ENCODE measurements at regions of chr1 and their contacts with region 1.

Region 1: GRCh38 chr1:32335790-32336590 is at the start of gene MARCKSL1:
- DNase-seq: peak; percentile 63
- ATAC-seq: peak; percentile 49
- H3K4me3 ChIP-seq: peak within 1 kb of the TSS; percentile 70 to 95 (median 84)
- H3K27ac ChIP-seq: peak within 1 kb of the TSS; percentile 68
- H3K4me1 ChIP-seq: peaks cover 57% of the 10 kb centered on the region
- H3K27me3 ChIP-seq: peaks cover 0 to 4% of the 10 kb centered on the region in 2 experiments; a peak in 2 of 5 replicates
- CTCF ChIP-seq: no peak
- EP300 ChIP-seq: no peak
- POLR2A ChIP-seq: peak; percentile 91 to 93
- RAD21 ChIP-seq: no peak
- total RNA-seq, gene MARCKSL1: 81.9 and 85.1 TPM in 2 replicates

Region 2: GRCh38 chr1:32215629-32216480 is 120.1 kb before region 1 on chr1:
- CTCF ChIA-PET with region 1: interaction called, 3 read pairs
- POLR2A ChIA-PET with region 1: interaction called, 22 read pairs
- in situ Hi-C with region 1: no loop called
- intact Hi-C with region 1: no loop called
- DNase-seq: peak; percentile 61
- ATAC-seq: peak; percentile 95
- H3K4me3 ChIP-seq: no peak overlapping the region
- H3K27ac ChIP-seq: no peak overlapping the region
- H3K4me1 ChIP-seq: peaks cover 16% of the 10 kb centered on the region
- H3K27me3 ChIP-seq: no peaks in the 10 kb centered on the region
- CTCF ChIP-seq: peak; percentile 89
- EP300 ChIP-seq: no peak
- POLR2A ChIP-seq: no peak
- RAD21 ChIP-seq: peak; percentile 90

Region 3: GRCh38 chr1:32291708-32292492 is 44.1 kb before region 1 on chr1 and contains the start of gene HDAC1:
- CTCF ChIA-PET with region 1: no interaction called
- POLR2A ChIA-PET with region 1: interaction called, 26 read pairs
- in situ Hi-C with region 1: no loop called
- intact Hi-C with region 1: no loop called
- DNase-seq: peak; percentile 93
- ATAC-seq: peak; percentile 98
- H3K4me3 ChIP-seq: peak within 1 kb of the TSS; percentile 94 to 99 (median 98)
- H3K27ac ChIP-seq: peak within 1 kb of the TSS; percentile 67
- H3K4me1 ChIP-seq: peaks cover 64% of the 10 kb centered on the region
- H3K27me3 ChIP-seq: no peaks in the 10 kb centered on the region; a peak in 1 of 5 replicates
- CTCF ChIP-seq: no peak; the same call in 1 of the 2 replicates
- EP300 ChIP-seq: peak in 1 of 2 experiments; percentile 50; a peak in 2 of 4 replicates
- POLR2A ChIP-seq: peak; percentile 28 to 85; a peak in 3 of 4 replicates
- RAD21 ChIP-seq: 0 out of 2 replicates have a peak, but pooled peaks have one; percentile 10
- total RNA-seq, gene HDAC1: 93.5 and 109 TPM in 2 replicates

Region 4: DNA sequence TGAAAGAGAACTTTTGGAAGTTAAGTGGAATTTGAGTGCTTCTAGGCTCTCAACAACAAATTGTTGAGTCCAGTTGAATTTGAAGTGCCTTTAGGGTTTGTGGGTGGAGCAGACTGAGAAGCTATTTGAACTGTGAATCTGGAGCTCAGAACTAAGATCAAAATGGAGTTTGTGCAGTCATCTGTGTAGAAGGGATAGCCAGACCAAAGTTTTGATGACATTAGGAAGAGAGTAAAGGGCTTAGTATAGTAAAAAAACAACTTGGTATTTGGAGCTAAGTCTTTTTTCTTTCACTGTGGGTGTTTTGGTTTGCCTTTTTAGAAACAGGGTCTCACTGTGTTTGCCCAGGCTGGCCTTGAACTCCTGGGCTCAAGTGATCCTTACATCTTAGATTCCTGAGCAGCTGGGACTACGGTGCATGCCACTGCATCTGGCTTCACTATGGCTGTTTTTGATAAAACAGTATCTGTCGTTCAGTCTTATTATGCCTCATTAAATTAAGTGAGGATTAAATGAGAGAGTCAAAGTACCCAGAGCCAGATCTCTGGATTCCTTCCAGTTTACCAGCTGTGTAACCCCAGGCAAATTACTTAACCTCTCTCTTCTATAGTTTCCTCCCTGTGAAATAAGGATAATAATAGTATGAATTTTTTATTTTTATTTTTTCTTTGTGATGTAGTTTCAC is 24.1 kb before region 1 on chr1:
- CTCF ChIA-PET with region 1: no interaction called
- POLR2A ChIA-PET with region 1: interaction called, 14 read pairs
- in situ Hi-C with region 1: no loop called
- intact Hi-C with region 1: no loop called
- DNase-seq: peak; percentile 34
- ATAC-seq: peak; percentile 75
- H3K4me3 ChIP-seq: no peak overlapping the region; a peak in 1 of 6 replicates
- H3K27ac ChIP-seq: peak overlapping the region; percentile 53
- H3K4me1 ChIP-seq: peaks cover 58% of the 10 kb centered on the region
- H3K27me3 ChIP-seq: no peaks in the 10 kb centered on the region
- CTCF ChIP-seq: no peak
- EP300 ChIP-seq: peak in 1 of 2 experiments; percentile 39; a peak in 1 of 4 replicates
- POLR2A ChIP-seq: no peak
- RAD21 ChIP-seq: no peak

Region 5: GRCh38 chr1:32394141-32394889 is 58.3 kb after region 1 on chr1 and contains the start of gene BSDC1:
- CTCF ChIA-PET with region 1: no interaction called
- POLR2A ChIA-PET with region 1: interaction called, 33 read pairs
- in situ Hi-C with region 1: no loop called
- intact Hi-C with region 1: loop called (anchors 10 kb)
- DNase-seq: peak; percentile 99
- ATAC-seq: peak; percentile 98
- H3K4me3 ChIP-seq: peak within 1 kb of the TSS; percentile 77 to 99 (median 91)
- H3K27ac ChIP-seq: peak within 1 kb of the TSS; percentile 96
- H3K4me1 ChIP-seq: peaks cover 31% of the 10 kb centered on the region
- H3K27me3 ChIP-seq: no peaks in the 10 kb centered on the region; a peak in 1 of 5 replicates
- CTCF ChIP-seq: peak; percentile 31; the same call in 1 of the 2 replicates
- EP300 ChIP-seq: no peak
- POLR2A ChIP-seq: peak; percentile 77 to 96
- RAD21 ChIP-seq: no peak; the same call in 1 of the 2 replicates
- total RNA-seq, gene BSDC1: 33.2 and 40.3 TPM in 2 replicates